ENCODE measurements at regions of chr6 and their contacts with region 1.

Region 1: DNA sequence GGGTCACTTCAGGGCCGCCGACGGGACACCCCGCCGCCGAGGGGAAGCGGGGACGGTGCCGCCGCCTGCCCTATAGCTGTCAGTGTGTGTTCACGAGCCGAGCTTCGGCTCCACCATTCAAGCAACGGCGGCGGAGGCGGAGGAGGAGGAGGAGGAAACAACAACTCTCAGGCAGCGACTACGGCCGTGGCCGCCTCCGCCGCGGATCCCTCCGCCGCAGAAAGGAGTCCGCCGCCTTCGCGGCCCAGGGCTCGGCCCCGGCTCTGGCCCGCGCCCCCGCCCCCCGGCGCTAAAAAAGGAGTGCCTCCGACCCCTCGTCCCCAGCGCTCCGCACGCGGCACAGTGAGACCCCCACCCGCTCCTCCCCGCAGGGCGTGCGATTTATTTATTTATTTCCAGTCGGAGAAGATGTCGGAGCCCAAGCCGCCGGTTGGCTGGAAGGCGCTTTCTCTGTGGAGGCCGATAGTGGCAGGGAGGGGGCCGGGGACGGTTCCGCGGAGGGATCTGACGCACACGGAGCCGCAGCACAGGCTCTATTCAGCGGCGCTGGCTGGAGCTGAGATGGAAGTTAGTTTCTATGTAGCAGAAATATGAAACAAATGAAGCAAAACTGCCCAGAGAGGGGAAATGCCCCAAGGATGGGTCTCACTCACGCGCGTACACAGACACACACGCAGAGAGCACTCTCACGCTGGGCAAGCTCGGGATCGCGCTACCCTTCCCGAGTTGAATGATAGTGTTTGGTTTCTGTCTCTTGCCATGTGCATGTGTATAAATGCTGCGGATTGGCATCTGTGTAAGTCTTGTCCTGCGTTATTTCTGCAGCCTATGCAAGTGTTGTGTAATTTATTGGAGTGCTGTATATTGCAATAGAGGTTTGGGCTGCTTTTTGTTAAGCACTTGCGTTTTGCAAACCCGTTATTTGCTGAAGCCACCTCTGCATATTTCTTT is at the start of gene PHIP:
- DNase-seq: peak; percentile 88
- H3K4me3 ChIP-seq: peak within 1 kb of the TSS; percentile 86 to 90
- H3K27ac ChIP-seq: peak within 1 kb of the TSS; percentile 99
- H3K4me1 ChIP-seq: no peaks in the 10 kb centered on the region
- H3K27me3 ChIP-seq: no peaks in the 10 kb centered on the region
- CTCF ChIP-seq: no peak
- POLR2A ChIP-seq: peak; percentile 41
- total RNA-seq, gene PHIP: 29.6 to 31.8 TPM

Region 2: GRCh38 chr6:79233611-79234149 is 155.3 kb after region 1 on chr6:
- intact Hi-C with region 1: loop called (anchors 5 kb)
- DNase-seq: peak; percentile 85
- H3K4me3 ChIP-seq: peak overlapping the region; percentile 59 to 67
- H3K27ac ChIP-seq: peak overlapping the region; percentile 88 to 91
- H3K4me1 ChIP-seq: no peaks in the 10 kb centered on the region
- H3K27me3 ChIP-seq: no peaks in the 10 kb centered on the region
- CTCF ChIP-seq: peak in 2 of 4 experiments; percentile 48 to 57
- POLR2A ChIP-seq: peak; percentile 50

Region 3: DNA sequence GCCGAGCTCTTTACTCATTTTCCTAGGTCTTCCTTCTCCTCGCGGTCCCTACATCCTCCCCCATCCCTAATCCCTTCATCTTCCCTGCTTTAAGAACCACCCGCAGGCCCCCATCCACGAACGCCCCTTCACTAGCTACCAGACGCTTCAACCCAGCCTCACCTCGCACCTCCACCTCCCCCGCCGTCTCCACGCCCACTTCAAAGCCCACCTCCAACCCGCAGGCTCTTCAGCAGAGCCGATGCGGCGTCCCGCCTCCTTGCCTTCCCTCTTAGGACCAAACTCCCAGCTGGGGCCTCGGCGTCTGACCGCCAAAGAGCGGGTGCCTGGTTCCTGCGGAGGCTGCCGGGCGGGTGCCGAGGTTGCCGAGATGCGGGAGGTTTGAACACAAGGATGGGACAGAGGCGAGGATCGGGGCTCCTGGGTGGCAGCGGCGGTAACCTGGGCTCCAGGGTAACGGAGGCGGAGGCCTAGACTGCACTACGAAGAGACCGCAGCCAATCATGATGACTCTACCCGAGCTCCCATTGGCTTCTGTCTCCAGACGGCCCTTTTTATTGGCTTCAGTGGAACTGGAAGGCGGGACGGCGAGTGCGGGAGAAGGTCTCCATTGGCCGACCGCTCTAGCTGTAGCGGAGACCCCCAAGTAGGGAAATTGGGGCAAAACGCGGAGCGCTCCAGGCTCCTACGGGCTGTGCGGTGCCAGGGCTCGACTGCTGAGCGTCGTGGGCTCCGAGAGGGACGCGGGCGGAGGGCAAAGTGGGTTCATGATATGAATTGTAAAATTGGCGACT is 458.8 kb after region 1 on chr6 and contains the start of gene LCA5:
- intact Hi-C with region 1: loop called (anchors 2 kb)
- DNase-seq: peak; percentile 97
- H3K4me3 ChIP-seq: peak within 1 kb of the TSS; percentile 72 to 75
- H3K27ac ChIP-seq: peak within 1 kb of the TSS; percentile 89 to 91
- H3K4me1 ChIP-seq: no peaks in the 10 kb centered on the region
- H3K27me3 ChIP-seq: no peaks in the 10 kb centered on the region
- CTCF ChIP-seq: no peak
- POLR2A ChIP-seq: peak; percentile 83
- total RNA-seq, gene LCA5: 4.9 to 11.2 TPM

Measured in prostate gland (tissue), 2 donors.